A673 (cell line): ENCODE measurements at regions of chr17 and their contacts with region 1.

Region 1: GRCh38 chr17:57987580-57988421 is at the start of gene VEZF1:
- DNase-seq: peak; percentile 88
- H3K4me3 ChIP-seq: peak within 1 kb of the TSS; percentile 87
- H3K27ac ChIP-seq: peak within 1 kb of the TSS; percentile 93
- H3K4me1 ChIP-seq: peaks cover 47% of the 10 kb centered on the region
- H3K27me3 ChIP-seq: no peaks in the 10 kb centered on the region
- CTCF ChIP-seq: no peak
- total RNA-seq, gene VEZF1: 75.7 and 77.7 TPM in 2 replicates

Region 2: DNA sequence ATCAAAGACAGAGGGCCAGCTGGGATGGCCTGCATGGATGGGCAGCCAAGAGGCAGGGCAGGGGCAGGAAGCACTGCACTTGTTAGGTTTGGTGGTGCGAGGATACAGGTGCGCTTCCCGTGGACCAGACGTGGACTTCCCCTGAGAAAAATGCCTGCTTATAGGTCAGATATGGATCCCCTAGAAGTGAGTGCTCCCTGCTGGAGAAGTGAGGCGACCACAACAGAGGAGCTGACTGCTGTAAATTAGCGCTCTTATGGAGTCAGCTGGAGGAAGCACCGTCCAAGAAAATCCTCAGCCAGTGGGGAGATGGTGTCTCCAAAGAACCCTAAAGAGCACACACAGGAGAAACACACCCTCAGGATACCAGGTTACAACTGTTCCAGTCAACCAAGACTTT is 215.0 kb before region 1 on chr17:
- CTCF ChIA-PET with region 1: no interaction called
- POLR2A ChIA-PET with region 1: no interaction called
- intact Hi-C with region 1: no loop called
- DNase-seq: no peak
- H3K4me3 ChIP-seq: no peak overlapping the region
- H3K27ac ChIP-seq: no peak overlapping the region
- H3K4me1 ChIP-seq: no peaks in the 10 kb centered on the region
- H3K27me3 ChIP-seq: peaks cover 8% of the 10 kb centered on the region
- CTCF ChIP-seq: 0 out of 2 replicates have a peak, but pooled peaks have one; percentile 22

Region 3: DNA sequence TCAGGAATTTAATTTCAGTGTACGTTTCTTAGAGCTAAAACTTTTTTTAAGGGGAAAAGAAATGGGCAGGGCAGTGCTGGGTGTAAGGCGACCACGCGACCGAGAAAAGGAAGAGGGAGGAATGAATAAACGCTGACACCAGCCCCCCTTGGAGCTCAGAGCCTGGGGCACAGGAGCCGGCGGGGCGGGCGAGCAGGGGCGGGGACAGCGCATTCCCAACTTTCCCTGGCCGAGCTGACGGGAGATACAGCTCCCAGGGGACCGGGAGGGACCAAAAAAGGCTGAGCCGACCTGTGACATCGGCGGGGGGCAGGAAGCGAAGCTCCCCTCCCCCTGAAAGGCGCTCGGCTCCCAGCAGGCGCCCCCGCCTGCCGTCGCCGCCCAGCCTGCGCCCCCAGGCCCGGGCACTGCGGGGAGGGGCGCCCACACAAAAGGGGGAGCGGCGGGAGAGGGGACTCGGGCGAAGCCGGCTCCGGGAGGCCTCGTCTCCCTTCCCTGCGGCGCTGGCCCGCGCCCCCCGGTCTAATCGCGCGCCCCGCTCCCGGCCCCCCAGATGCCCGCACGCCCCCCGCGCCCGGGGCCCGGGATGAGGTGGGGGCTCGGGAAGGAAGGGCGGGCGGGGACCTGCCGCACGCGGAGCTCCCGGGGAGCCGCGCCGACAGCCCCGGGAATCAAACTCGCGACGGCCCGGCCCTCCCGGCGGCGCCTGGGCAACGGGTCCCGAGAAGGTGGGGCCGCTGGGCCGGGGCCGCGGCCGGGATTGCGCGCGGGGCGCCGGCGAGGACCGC is 33.2 kb before region 1 on chr17:
- CTCF ChIA-PET with region 1: no interaction called
- POLR2A ChIA-PET with region 1: no interaction called
- intact Hi-C with region 1: loop called (anchors 5 kb)
- DNase-seq: peak; percentile 95
- H3K4me3 ChIP-seq: peak overlapping the region; percentile 83
- H3K27ac ChIP-seq: peak overlapping the region; percentile 90
- H3K4me1 ChIP-seq: peaks cover 53% of the 10 kb centered on the region
- H3K27me3 ChIP-seq: no peaks in the 10 kb centered on the region
- CTCF ChIP-seq: no peak